CD4-positive, alpha-beta T cell (primary cell): ENCODE measurements at regions of chr14 and their contacts with region 1.

Region 1: DNA sequence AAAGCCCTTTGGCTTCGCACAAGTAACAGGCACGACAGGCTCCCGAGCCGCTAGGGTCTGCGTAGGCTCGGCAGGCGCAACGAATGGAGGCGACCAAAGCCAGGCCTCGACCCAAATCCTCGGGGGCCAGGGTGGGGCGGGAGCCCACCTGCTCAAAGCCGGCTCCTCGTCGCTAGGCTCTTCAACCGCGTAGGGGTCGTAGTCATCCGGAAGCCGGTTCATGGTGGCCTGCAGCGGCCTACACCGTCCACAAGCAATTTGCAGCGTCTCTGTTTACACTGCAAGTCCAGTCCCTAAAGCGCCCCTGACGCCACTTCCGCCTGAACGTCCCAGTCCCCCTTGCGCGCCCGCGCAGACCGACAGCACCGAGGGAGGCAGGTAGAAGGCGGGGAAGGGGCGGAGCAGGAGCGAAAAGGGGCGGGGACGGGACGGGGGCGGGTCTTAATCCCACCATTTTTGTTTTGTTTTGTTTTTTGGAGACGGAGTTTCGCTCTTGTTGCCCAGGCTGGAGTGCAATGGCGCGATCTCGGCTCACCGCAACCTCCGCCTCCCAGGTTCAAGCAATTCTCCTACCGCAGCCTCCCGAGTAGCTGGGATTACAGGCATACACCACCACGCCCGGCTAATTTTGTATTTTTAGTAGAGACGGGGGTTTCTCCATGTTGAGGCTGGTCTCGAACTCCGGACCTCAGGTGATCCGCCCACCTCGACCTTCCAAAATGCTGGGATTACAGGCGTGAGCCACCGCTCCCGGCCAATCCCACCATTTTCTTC is at the start of gene EAPP:
- DNase-seq: peak; percentile 90 to 97 (median 95)
- ATAC-seq: peak; percentile 97
- H3K4me3 ChIP-seq: peak within 1 kb of the TSS; percentile 88
- H3K4me3 Mint-ChIP-seq: peak within 1 kb of the TSS; percentile 99
- H3K27ac ChIP-seq: peak within 1 kb of the TSS; percentile 89 to 93
- H3K27ac Mint-ChIP-seq: peak within 1 kb of the TSS; percentile 98
- H3K4me1 ChIP-seq: peaks cover 31% of the 10 kb centered on the region
- H3K4me1 Mint-ChIP-seq: peaks cover 33% of the 10 kb centered on the region
- H3K27me3 ChIP-seq: no peaks in the 10 kb centered on the region
- H3K27me3 Mint-ChIP-seq: no peaks in the 10 kb centered on the region
- CTCF ChIP-seq: no peak
- total RNA-seq, gene EAPP: 94.5 to 98.3 TPM

Region 2: GRCh38 chr14:34461334-34462131 is 78.1 kb before region 1 on chr14:
- CTCF ChIA-PET with region 1: no interaction called
- POLR2A ChIA-PET with region 1: no interaction called
- intact Hi-C with region 1: loop called in 1 of 2 experiments (anchors 5 kb)
- DNase-seq: peak in 6 of 14 experiments; percentile 4 to 48 (median 20)
- ATAC-seq: no peak
- H3K4me3 ChIP-seq: peak overlapping the region; percentile 78
- H3K4me3 Mint-ChIP-seq: peak overlapping the region; percentile 87
- H3K27ac ChIP-seq: no peak overlapping the region
- H3K27ac Mint-ChIP-seq: peak overlapping the region; percentile 50
- H3K4me1 ChIP-seq: peaks cover 12% of the 10 kb centered on the region
- H3K4me1 Mint-ChIP-seq: peaks cover 15% of the 10 kb centered on the region
- H3K27me3 ChIP-seq: no peaks in the 10 kb centered on the region
- H3K27me3 Mint-ChIP-seq: no peaks in the 10 kb centered on the region
- CTCF ChIP-seq: no peak

Region 3: GRCh38 chr14:34568803-34569202 is 29.2 kb after region 1 on chr14:
- CTCF ChIA-PET with region 1: no interaction called
- POLR2A ChIA-PET with region 1: no interaction called
- intact Hi-C with region 1: loop called in 1 of 2 experiments (anchors 5 kb)
- DNase-seq: no peak
- ATAC-seq: no peak
- H3K4me3 ChIP-seq: no peak overlapping the region
- H3K4me3 Mint-ChIP-seq: no peak overlapping the region
- H3K27ac ChIP-seq: no peak overlapping the region
- H3K27ac Mint-ChIP-seq: no peak overlapping the region
- H3K4me1 ChIP-seq: no peaks in the 10 kb centered on the region
- H3K4me1 Mint-ChIP-seq: no peaks in the 10 kb centered on the region
- H3K27me3 ChIP-seq: no peaks in the 10 kb centered on the region
- H3K27me3 Mint-ChIP-seq: no peaks in the 10 kb centered on the region
- CTCF ChIP-seq: no peak

Region 4: DNA sequence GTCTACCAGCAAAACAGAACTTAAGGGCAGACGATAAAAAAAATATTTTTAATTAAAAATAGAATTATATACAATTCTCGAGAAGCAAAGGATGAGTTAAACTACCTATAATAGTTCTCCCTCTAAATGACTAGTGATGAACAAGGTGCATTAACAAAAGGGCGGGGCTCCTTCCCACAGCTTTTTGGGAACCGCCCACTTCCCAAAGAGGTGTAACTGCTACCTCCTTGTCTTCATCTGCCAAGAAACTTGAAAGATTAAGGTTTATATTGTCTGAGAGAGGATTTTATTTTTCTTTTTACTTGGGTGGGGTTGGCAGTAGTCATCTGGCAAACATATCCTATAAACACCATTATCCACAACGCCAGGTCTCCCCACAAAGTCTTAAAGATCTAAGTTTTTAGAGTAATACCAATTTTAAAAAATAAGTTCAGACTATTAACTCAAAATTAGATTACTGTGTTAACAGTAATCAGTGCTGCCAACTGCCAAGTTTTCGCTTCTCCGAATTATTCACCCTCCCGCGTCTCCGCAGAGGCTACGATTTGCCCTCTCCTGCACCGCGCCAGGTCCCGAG is 1268.6 kb after region 1 on chr14:
- CTCF ChIA-PET with region 1: no interaction called
- POLR2A ChIA-PET with region 1: no interaction called
- intact Hi-C with region 1: loop called in 1 of 2 experiments (anchors 10 kb)
- DNase-seq: peak in 6 of 14 experiments; percentile 15 to 53 (median 40)
- ATAC-seq: no peak
- H3K4me3 ChIP-seq: peak overlapping the region; percentile 85
- H3K4me3 Mint-ChIP-seq: peak overlapping the region; percentile 99
- H3K27ac ChIP-seq: peak overlapping the region; percentile 75 to 88
- H3K27ac Mint-ChIP-seq: peak overlapping the region; percentile 88
- H3K4me1 ChIP-seq: peaks cover 17% of the 10 kb centered on the region
- H3K4me1 Mint-ChIP-seq: peaks cover 44% of the 10 kb centered on the region
- H3K27me3 ChIP-seq: no peaks in the 10 kb centered on the region
- H3K27me3 Mint-ChIP-seq: no peaks in the 10 kb centered on the region
- CTCF ChIP-seq: no peak